Heart right ventricle (tissue), 16 donors: ENCODE measurements at regions of chr3 and their contacts with region 1.

Region 1: DNA sequence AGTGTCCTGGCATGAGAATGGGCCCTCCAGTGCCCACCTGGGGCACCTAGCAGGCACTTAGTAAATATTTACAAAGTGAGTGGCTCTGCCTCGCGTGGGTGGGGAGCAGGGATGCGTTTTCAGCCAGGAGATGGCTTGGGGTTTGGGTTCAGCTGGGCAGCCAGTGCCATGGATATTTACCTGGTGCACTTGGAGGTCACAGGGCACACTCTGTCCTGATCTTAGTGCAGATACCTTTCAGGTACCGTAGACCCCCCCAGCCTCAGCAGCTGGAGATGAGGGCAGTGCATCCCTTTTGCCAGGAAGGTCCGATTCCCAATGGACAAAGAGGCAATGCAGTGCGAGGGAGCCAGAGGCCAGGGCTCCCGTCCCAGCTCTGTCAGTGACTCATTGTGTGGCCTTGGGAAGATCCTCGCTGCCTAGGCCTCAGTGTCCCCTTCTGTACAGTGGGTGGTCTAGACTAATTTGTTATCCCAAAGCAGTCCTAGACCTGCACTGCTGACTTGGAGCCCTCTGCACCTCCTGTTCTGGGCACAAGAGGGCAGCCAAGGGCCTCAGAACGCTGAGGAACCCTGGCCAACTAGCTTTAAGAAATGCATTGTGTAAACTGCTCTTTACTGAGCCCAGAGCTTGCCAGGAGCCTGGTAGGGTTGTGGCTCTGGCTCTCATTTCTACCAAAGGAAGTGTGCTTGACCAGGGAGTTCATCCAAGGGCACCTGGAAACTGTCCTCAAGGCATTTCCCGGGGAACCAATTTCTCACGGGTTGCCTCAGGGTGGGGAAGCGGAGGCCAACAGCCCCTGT is 16.0 kb downstream of the HDAC11 start:
- DNase-seq: peak; percentile 76 to 79
- ATAC-seq: peak; percentile 84 to 92 (median 90)
- H3K4me3 ChIP-seq: no peak overlapping the region
- H3K27ac ChIP-seq: no peak overlapping the region
- H3K4me1 ChIP-seq: peaks cover 3 to 20% (median 9%) of the 10 kb centered on the region in 9 donors
- H3K27me3 ChIP-seq: no peaks in the 10 kb centered on the region
- CTCF ChIP-seq: peak; percentile 83 to 96 (median 93)

Region 2: DNA sequence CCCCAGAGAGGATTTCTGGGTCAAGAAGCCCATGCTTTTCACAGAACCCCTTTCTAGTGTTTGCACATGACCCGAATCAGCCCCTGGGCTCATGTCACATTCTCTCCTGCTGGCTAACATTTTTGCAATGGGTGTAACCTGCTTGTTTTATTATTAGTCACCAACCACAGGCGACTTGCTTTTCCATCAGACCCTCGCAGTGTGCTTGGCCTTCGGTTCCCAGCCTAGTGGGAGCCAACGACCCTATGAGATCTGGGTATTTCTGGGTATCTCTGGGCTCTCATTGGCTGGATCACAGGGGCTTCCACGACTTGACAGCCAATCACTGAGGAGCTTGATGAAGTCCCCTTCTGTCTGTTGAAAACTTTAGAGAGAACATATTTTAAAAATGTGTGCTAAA is 41.8 kb after region 1 on chr3:
- intact Hi-C with region 1: loop called in 1 of 10 experiments (anchors 1 kb)
- DNase-seq: no peak
- ATAC-seq: peak in 2 of 8 donors; percentile 41 to 44
- H3K4me3 ChIP-seq: no peak overlapping the region
- H3K27ac ChIP-seq: peak overlapping the region in 4 of 10 donors; percentile 7 to 72 (median 46)
- H3K4me1 ChIP-seq: peaks cover 6 to 28% (median 13%) of the 10 kb centered on the region in 9 donors
- H3K27me3 ChIP-seq: peaks cover 0 to 4% (median 0%) of the 10 kb centered on the region in 7 donors
- CTCF ChIP-seq: no peak

Region 3: DNA sequence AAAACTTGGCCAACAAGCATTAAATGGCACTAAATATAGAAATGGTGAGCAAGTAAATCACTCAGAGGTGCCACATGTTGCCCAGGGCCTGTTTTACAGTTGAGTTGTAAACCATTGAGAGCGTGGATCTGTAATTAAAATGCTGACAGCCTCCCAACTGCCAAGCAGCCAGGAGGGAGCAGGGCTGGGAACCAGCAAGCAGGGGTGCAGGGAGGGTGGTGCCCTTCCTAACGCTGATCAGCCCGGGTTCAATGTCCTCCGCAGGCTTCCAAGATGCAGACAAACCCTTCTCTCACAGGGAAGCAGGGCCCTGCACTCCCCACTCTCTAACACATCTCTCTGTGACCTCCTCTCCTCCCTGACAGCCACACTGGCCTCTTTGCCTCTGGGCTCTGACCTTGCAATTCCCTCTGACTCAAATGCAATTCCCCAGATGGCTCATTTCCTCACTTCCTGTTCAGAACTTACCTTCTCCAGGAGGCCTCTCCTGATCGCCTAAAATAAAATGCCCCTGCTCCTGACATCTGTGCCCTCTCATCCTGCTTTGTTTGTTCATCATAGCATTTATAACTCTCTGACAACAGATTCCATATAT is 343.7 kb after region 1 on chr3:
- intact Hi-C with region 1: no loop called
- DNase-seq: no peak
- ATAC-seq: no peak
- H3K4me3 ChIP-seq: no peak overlapping the region
- H3K27ac ChIP-seq: no peak overlapping the region
- H3K4me1 ChIP-seq: no peaks in the 10 kb centered on the region
- H3K27me3 ChIP-seq: peaks cover 0 to 67% (median 23%) of the 10 kb centered on the region in 7 donors
- CTCF ChIP-seq: no peak